ENCODE measurements at regions of chr15 and their contacts with region 1.

Region 1: DNA sequence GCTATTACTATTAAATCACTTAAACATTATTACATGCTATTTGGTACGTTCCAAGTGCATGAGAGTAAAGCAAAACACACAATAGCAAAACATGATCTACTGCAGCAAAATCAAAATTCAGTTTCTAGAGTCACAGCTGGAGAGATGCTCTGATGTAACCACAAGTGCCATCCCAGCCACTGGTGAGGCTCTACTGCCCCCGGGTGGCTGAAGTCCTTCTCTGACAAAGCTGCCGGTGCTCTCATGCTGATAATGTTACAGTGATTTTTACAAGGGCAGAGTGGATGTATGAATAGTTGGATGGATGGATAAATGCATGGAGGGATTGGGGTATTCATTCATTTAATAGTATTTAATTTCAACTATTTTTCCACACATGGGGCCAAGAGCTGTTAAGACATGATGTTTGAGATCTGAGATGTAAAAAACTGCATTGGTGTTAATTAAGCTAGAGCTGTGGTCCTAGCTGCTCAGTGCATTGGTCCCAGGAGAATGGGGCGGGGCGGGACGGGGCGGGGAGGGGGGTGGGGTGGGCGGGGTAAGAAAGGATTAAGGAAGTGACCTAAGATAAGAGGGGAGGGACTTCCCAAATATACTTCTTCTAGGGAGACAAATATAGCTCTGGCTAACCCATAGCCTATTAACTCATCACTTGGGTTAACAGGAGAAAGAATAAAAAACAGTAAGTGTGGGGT is 5.3 kb upstream of the SPESP1 start:
- H3K4me3 ChIP-seq: no peak overlapping the region
- H3K27ac ChIP-seq: no peak overlapping the region
- H3K4me1 ChIP-seq: no peaks in the 10 kb centered on the region
- CTCF ChIP-seq: peak; percentile 92

Region 2: DNA sequence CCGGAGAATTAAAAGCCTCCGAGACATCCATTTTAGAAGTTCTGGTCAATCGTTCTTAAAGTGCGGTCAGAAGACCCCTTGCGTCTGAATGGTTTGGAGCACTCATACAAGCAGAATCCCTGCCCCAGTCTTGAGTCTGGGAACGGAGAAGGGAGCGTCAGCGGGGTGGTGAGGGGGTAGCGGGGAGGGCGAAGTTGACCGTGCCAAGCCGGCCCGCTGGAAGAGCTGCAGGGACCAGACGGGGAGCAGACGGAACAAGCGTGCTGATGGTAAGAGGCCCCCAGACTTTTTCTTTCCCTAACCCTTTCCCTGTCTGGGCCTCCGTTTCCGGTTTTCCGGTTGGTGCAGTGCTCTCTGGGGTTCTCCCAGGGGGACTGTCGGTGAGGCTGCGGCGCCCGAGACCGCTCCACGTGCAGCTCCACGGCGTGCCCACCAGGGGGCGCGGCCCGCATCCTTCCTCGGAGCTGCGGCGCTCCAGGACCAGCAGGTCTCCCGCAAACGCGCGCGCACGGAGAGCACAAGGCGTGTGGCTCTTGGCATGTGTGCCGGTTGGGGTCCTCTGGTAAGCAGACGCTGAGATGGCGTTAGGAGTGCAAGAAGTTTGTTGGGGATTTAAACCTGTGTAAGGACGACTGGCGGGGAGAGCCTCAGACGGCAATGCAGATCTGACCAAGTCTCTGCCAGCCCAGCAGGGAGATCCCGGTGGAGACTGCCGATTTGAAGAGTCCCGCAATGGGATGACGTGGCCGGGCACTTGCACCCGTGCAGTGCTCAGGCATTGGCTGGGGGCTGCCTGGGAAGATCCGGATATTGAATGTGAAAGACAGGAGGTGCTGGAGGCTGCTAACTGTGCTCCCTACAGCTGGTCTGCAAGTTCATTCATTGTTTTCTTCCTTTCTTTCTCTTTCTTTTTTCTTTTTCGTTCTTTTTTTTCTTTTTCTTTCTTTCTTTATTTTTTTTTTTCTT is 365.4 kb before region 1 on chr15:
- CTCF ChIA-PET with region 1: interaction called, 137 read pairs
- POLR2A ChIA-PET with region 1: interaction called, 3 read pairs
- H3K4me3 ChIP-seq: peak overlapping the region; percentile 44
- H3K27ac ChIP-seq: no peak overlapping the region
- H3K4me1 ChIP-seq: no peaks in the 10 kb centered on the region
- CTCF ChIP-seq: peak; percentile 99

Region 3: DNA sequence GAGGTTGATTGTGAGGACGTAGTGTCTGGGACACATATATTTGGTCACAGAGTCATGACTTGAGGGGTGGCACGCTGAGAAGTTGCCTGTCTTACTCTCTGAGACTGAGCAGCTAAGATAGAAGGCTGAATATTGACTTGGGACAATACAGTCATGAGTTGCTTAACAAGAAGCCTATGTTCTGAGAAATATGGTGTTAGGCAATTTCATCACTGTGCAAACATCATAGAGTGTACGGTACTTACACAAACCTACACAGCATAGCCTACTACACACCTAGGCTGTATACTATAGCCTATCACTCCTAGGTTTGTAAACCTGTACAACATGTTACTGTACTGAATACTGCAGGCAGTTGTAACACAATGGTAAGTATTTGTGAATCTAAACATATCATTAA is 25.0 kb before region 1 on chr15:
- CTCF ChIA-PET with region 1: interaction called, 15 read pairs
- POLR2A ChIA-PET with region 1: no interaction called
- H3K4me3 ChIP-seq: no peak overlapping the region
- H3K27ac ChIP-seq: no peak overlapping the region
- H3K4me1 ChIP-seq: no peaks in the 10 kb centered on the region; the same call in 1 of the 2 replicates
- CTCF ChIP-seq: no peak

Region 4: GRCh38 chr15:68939221-68939900 is 14.3 kb after region 1 on chr15:
- CTCF ChIA-PET with region 1: interaction called, 17 read pairs
- POLR2A ChIA-PET with region 1: no interaction called
- H3K4me3 ChIP-seq: no peak overlapping the region
- H3K27ac ChIP-seq: no peak overlapping the region
- H3K4me1 ChIP-seq: no peaks in the 10 kb centered on the region
- CTCF ChIP-seq: no peak

Region 5: DNA sequence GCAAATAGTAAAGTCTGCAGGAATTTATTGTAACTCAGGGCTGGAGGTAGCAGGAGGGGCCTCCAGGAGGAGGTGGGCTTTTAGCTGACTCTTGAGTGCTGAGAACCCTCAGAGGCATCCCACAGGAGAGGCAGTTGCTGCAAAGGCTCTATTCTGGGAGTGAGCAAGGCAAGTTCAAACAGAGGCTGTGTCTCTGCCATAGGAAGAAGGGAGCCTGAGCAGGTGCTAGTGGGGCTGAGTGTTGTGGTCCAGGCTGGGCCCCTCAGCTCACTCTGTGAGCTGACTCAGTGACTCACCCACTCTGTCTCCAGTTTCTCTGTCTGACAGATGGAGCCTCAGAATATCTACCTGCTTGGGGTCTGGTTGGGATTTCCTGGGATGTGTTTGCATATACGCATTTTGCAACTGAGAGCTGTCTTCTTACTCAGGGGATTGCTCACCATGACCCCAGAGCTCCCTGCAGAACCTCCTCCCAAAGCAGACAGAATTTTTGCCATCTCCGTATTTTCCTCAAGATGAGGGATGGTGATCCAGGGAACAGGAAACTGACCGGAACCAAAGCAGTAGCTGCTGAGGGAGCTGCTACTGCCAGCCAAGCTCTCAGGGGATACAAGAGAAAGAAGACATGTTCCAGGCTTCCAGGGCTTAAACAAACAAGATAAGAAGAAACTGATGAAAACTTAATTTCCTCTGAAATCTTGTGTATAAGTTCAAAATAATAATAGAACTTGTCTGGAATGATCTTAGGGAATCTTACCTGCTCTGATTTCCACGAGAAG is 75.9 kb after region 1 on chr15:
- CTCF ChIA-PET with region 1: no interaction called
- POLR2A ChIA-PET with region 1: no interaction called
- H3K4me3 ChIP-seq: no peak overlapping the region
- H3K27ac ChIP-seq: no peak overlapping the region
- H3K4me1 ChIP-seq: no peaks in the 10 kb centered on the region
- CTCF ChIP-seq: no peak

Measured in HEK293 (cell line).